B cell (primary cell): ENCODE measurements at regions of chr17 and their contacts with region 1.

Region 1: GRCh38 chr17:51006601-51007000 is 114.1 kb downstream of the SPAG9 start:
- DNase-seq: no peak
- ATAC-seq: no peak
- H3K4me3 ChIP-seq: no peak overlapping the region
- H3K4me3 Mint-ChIP-seq: no peak overlapping the region
- H3K27ac ChIP-seq: no peak overlapping the region
- H3K27ac Mint-ChIP-seq: no peak overlapping the region
- H3K4me1 ChIP-seq: no peaks in the 10 kb centered on the region
- H3K4me1 Mint-ChIP-seq: no peaks in the 10 kb centered on the region
- H3K27me3 ChIP-seq: no peaks in the 10 kb centered on the region
- H3K27me3 Mint-ChIP-seq: no peaks in the 10 kb centered on the region
- CTCF ChIP-seq: no peak

Region 2: GRCh38 chr17:51056813-51057510 is 50.4 kb after region 1 on chr17:
- CTCF ChIA-PET with region 1: interaction called, 258 read pairs
- POLR2A ChIA-PET with region 1: no interaction called
- intact Hi-C with region 1: loop called (anchors 1 kb)
- DNase-seq: peak; percentile 61
- ATAC-seq: peak; percentile 65
- H3K4me3 ChIP-seq: no peak overlapping the region
- H3K4me3 Mint-ChIP-seq: no peak overlapping the region
- H3K27ac ChIP-seq: no peak overlapping the region
- H3K27ac Mint-ChIP-seq: no peak overlapping the region
- H3K4me1 ChIP-seq: peaks cover 12 to 16% of the 10 kb centered on the region in 2 donors
- H3K4me1 Mint-ChIP-seq: peaks cover 15% of the 10 kb centered on the region
- H3K27me3 ChIP-seq: no peaks in the 10 kb centered on the region
- H3K27me3 Mint-ChIP-seq: no peaks in the 10 kb centered on the region
- CTCF ChIP-seq: peak; percentile 77